ENCODE measurements at regions of chr2 and their contacts with region 1.

Region 1: GRCh38 chr2:235968616-235969324 is 199.4 kb downstream of the GBX2 start:
- DNase-seq: no peak
- H3K4me3 ChIP-seq: no peak overlapping the region
- H3K27ac ChIP-seq: no peak overlapping the region
- H3K4me1 ChIP-seq: no peaks in the 10 kb centered on the region
- H3K27me3 ChIP-seq: no peaks in the 10 kb centered on the region
- CTCF ChIP-seq: no peak
- EP300 ChIP-seq: no peak
- POLR2A ChIP-seq: no peak

Region 2: GRCh38 chr2:236008006-236008405 is 39.2 kb after region 1 on chr2:
- in situ Hi-C with region 1: no loop called
- intact Hi-C with region 1: loop called (anchors 1 kb)
- DNase-seq: no peak
- H3K4me3 ChIP-seq: no peak overlapping the region
- H3K27ac ChIP-seq: no peak overlapping the region
- H3K4me1 ChIP-seq: no peaks in the 10 kb centered on the region
- H3K27me3 ChIP-seq: no peaks in the 10 kb centered on the region
- CTCF ChIP-seq: no peak
- EP300 ChIP-seq: no peak
- POLR2A ChIP-seq: no peak

Region 3: DNA sequence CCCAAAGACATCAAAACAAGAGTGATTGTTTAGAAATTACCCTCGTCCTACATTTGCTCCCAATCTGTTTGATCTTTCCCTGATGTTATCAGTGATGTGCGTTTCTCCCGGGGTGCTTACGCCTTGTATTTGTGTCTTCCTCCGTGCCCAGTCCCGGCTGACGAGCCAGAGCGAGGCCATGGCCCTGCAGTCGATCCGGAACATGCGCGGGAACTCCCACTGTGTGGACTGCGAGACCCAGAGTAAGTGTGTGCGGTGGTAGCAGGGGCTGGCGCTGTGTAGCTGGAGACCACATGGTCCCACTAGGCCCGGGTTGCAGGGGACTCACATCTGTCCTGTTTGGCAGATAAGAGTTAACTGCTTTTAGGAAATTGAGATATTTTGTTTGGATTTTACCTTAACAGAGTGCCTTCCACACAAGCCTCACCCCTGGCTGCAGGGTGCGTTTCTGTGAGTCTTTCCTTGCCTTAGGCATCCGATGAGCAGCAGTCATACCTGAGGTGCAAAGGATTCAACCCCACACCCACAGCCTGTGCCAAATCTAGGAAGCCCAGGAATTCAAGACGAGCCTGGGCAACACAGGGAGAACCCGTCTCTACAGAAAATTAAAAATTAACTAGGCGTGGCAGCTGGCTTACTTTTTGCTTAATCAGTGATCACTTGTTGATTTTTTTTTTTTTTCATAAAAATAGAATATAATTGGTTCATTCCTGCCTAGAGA is 72.0 kb after region 1 on chr2:
- in situ Hi-C with region 1: no loop called
- intact Hi-C with region 1: no loop called
- DNase-seq: no peak
- H3K4me3 ChIP-seq: no peak overlapping the region
- H3K27ac ChIP-seq: no peak overlapping the region
- H3K4me1 ChIP-seq: no peaks in the 10 kb centered on the region
- H3K27me3 ChIP-seq: no peaks in the 10 kb centered on the region
- CTCF ChIP-seq: no peak
- EP300 ChIP-seq: no peak
- POLR2A ChIP-seq: no peak

Measured in transverse colon (tissue), 4 donors.